ENCODE measurements at regions of chr6 and their contacts with region 1.

Region 1: GRCh38 chr6:112180095-112180820 is 74.1 kb downstream of the LAMA4 start:
- DNase-seq: no peak
- ATAC-seq: peak; percentile 75
- H3K4me3 ChIP-seq: no peak overlapping the region
- H3K27ac ChIP-seq: no peak overlapping the region
- H3K4me1 ChIP-seq: no peaks in the 10 kb centered on the region
- H3K27me3 ChIP-seq: no peaks in the 10 kb centered on the region

Region 2: DNA sequence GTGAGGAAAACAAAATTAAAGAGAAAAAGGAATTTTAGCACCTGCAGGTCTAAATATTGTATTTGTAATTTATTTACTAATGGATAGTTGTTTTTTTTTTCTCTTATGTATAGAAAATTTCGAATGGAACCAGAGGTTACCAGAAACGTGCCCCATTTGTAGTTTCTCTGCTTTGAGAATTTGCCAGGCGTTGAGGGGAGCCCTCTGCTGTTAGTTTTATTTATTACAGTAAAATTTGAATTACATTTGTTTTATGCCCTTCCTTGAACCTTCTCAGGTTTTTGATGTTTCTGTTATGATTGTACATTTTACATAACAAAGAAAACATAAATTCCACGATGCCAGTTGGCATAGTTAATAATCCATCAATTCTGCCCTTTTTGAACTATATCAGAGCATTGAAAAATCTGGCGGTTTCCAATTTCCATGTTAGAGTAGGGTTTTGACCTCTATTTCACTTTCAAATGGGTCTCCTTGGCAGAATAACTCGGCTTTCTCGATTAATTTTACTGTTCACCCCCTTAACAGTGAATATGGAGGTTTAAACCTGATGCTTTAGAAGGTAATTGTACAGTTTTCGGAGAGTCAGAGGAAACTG is 131.8 kb after region 1 on chr6:
- intact Hi-C with region 1: loop called (anchors 2 kb)
- DNase-seq: no peak
- ATAC-seq: no peak
- H3K4me3 ChIP-seq: no peak overlapping the region
- H3K27ac ChIP-seq: no peak overlapping the region
- H3K4me1 ChIP-seq: no peaks in the 10 kb centered on the region
- H3K27me3 ChIP-seq: no peaks in the 10 kb centered on the region

Region 3: DNA sequence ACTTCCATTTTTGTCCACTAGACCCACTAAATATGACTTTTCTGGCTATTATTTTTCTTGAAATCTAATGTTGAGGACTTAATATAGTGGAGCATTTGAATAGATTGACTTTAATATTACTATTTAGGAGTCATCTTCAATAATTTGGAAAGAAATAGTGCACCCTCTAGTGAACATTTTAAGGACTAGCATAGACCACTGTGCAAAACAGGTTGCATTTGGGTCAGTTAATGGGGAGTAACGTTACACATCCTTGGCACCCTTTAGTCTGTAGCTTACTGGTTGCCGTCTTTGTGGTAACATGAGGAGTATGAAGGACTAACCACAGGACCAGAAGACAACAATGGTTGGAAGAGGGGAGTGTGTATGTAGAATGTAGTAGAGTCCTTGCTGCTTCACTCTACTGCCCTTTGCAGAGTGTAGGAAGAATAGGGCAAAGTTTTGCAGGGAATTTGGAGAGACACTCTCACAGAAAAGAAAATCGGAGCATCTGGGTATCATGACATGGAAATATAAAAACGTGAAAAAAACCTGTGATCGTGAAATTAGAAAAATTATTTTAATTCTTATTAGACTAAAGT is 192.1 kb after region 1 on chr6:
- intact Hi-C with region 1: loop called (anchors 5 kb)
- DNase-seq: no peak
- ATAC-seq: no peak
- H3K4me3 ChIP-seq: no peak overlapping the region
- H3K27ac ChIP-seq: no peak overlapping the region
- H3K4me1 ChIP-seq: no peaks in the 10 kb centered on the region
- H3K27me3 ChIP-seq: no peaks in the 10 kb centered on the region